ENCODE measurements at regions of chr7 and their contacts with region 1.

Region 1: GRCh38 chr7:1512781-1513656 is 8.8 kb upstream of the INTS1 start:
- DNase-seq: no peak
- ATAC-seq: 0 out of 3 replicates have a peak, but pooled peaks have one; percentile 5
- H3K4me3 ChIP-seq: no peak overlapping the region
- H3K27ac ChIP-seq: no peak overlapping the region
- H3K4me1 ChIP-seq: peaks cover 67% of the 10 kb centered on the region
- H3K27me3 ChIP-seq: peaks cover 0 to 2% of the 10 kb centered on the region in 2 experiments; a peak in 1 of 5 replicates
- CTCF ChIP-seq: no peak
- EP300 ChIP-seq: no peak
- POLR2A ChIP-seq: no peak
- RAD21 ChIP-seq: no peak

Region 2: GRCh38 chr7:1537535-1538412 is 24.8 kb after region 1 on chr7:
- CTCF ChIA-PET with region 1: no interaction called
- POLR2A ChIA-PET with region 1: interaction called, 13 read pairs
- in situ Hi-C with region 1: no loop called
- intact Hi-C with region 1: no loop called
- DNase-seq: no peak
- ATAC-seq: no peak
- H3K4me3 ChIP-seq: peak overlapping the region; percentile 33 to 68 (median 61); a peak in 4 of 6 replicates
- H3K27ac ChIP-seq: peak overlapping the region; percentile 85
- H3K4me1 ChIP-seq: peaks cover 47% of the 10 kb centered on the region
- H3K27me3 ChIP-seq: no peaks in the 10 kb centered on the region
- CTCF ChIP-seq: 0 out of 2 replicates have a peak, but pooled peaks have one; percentile 1
- EP300 ChIP-seq: no peak; a peak in 1 of 4 replicates
- POLR2A ChIP-seq: peak in 1 of 2 experiments; percentile 35; a peak in 1 of 4 replicates
- RAD21 ChIP-seq: 0 out of 2 replicates have a peak, but pooled peaks have one; percentile 7

Measured in HepG2 (cell line).